Activated CD8-positive, alpha-beta T cell treated with anti-CD3 and anti-CD28 coated beads for 36 hours (primary cell): ENCODE measurements at regions of chr15 and their contacts with region 1.

Region 1: DNA sequence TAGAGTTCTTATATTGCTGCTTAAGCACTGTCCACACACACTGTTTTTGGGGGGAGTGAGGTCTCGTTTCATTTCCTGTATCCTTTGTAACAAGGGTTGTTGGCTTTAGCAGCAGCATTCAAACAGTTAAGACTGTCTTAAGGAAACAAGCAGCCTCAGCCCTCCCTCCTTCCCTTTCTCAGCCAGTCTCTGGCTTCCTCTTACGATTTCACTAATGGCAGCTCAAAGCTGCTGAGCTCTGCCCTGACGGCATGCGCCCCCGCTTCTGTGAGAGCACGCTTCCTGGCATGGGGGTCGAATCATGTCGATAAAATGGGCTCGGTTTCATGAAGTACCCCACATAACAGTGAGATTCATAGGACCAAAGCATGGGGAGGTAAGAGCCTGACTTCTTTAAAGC is 105.0 kb downstream of the KLHL25 start:
- DNase-seq: peak; percentile 84
- ATAC-seq: peak; percentile 70
- H3K4me3 Mint-ChIP-seq: peak overlapping the region; percentile 81
- H3K27ac Mint-ChIP-seq: peak overlapping the region; percentile 97
- H3K4me1 Mint-ChIP-seq: peaks cover 70% of the 10 kb centered on the region
- H3K27me3 Mint-ChIP-seq: no peaks in the 10 kb centered on the region
- CTCF ChIP-seq: no peak

Region 2: DNA sequence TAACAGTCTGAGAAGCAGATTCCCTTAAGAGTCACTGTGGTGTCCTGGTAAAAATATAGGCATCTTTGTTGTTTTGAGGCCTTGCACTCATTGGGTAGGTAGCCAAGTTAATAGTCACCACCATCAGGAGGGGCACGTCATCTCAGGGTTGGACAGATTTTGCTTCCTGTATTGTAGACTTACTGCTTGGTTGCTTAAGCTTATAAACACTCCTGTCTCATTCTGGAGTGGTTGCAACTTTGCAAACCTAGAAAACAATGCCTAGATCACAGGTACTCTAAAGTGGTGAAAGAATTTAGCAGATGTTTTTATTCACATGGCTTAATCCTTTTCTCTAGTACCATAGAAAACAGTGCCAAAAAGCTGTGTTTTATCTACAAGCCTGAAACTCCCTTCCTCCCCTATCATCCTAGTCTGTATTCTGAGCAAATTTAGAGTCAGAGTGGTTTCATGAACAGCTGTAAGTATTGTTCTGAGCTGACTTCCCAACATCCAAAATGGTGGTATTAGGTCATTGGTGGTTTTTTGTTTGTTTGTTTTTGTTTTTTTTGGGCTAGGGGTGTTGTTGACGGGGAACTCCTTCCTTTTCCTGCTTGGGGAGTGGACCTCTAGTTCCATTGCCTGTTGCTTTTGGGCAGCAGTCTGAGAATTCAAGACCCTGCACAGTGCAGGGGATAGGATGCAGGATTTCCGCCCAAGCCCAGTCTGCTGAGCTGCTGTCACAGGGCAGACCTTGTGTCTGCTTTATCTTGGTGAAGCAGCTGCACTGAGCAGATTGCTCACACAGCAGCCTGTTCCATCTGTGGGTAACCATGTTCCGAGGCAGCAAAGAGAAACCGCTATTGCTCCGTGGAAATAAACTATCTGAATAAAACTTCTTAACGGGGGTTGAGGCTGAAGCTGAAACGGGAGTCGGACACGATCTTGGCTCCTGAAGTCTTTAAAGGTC is 107.3 kb before region 1 on chr15:
- CTCF ChIA-PET with region 1: interaction called, 14 read pairs
- POLR2A ChIA-PET with region 1: interaction called, 15 read pairs
- intact Hi-C with region 1: no loop called
- DNase-seq: peak; percentile 78
- ATAC-seq: peak; percentile 69
- H3K4me3 Mint-ChIP-seq: peak overlapping the region; percentile 83
- H3K27ac Mint-ChIP-seq: peak overlapping the region; percentile 94
- H3K4me1 Mint-ChIP-seq: peaks cover 80% of the 10 kb centered on the region
- H3K27me3 Mint-ChIP-seq: no peaks in the 10 kb centered on the region
- CTCF ChIP-seq: no peak

Region 3: GRCh38 chr15:85646538-85647091 is 43.1 kb before region 1 on chr15:
- CTCF ChIA-PET with region 1: interaction called, 4 read pairs
- POLR2A ChIA-PET with region 1: interaction called, 18 read pairs
- intact Hi-C with region 1: no loop called
- DNase-seq: peak; percentile 60
- ATAC-seq: peak; percentile 77
- H3K4me3 Mint-ChIP-seq: peak overlapping the region; percentile 26
- H3K27ac Mint-ChIP-seq: peak overlapping the region; percentile 81
- H3K4me1 Mint-ChIP-seq: peaks cover 49% of the 10 kb centered on the region
- H3K27me3 Mint-ChIP-seq: no peaks in the 10 kb centered on the region
- CTCF ChIP-seq: no peak

Region 4: GRCh38 chr15:85702321-85703101 is 12.8 kb after region 1 on chr15:
- CTCF ChIA-PET with region 1: interaction called, 31 read pairs
- POLR2A ChIA-PET with region 1: interaction called, 152 read pairs
- intact Hi-C with region 1: loop called (anchors 1 kb)
- DNase-seq: peak; percentile 42
- ATAC-seq: peak; percentile 47
- H3K4me3 Mint-ChIP-seq: peak overlapping the region; percentile 64
- H3K27ac Mint-ChIP-seq: peak overlapping the region; percentile 95
- H3K4me1 Mint-ChIP-seq: peaks cover 65% of the 10 kb centered on the region
- H3K27me3 Mint-ChIP-seq: no peaks in the 10 kb centered on the region
- CTCF ChIP-seq: no peak

Region 5: GRCh38 chr15:85750319-85750806 is 60.6 kb after region 1 on chr15:
- CTCF ChIA-PET with region 1: no interaction called
- POLR2A ChIA-PET with region 1: no interaction called
- intact Hi-C with region 1: no loop called
- DNase-seq: no peak
- ATAC-seq: no peak
- H3K4me3 Mint-ChIP-seq: no peak overlapping the region
- H3K27ac Mint-ChIP-seq: peak overlapping the region; percentile 38
- H3K4me1 Mint-ChIP-seq: peaks cover 30% of the 10 kb centered on the region
- H3K27me3 Mint-ChIP-seq: no peaks in the 10 kb centered on the region
- CTCF ChIP-seq: no peak